Activated CD4-positive, alpha-beta memory T cell treated with anti-CD3 and anti-CD28 coated beads for 36 hours (primary cell): ENCODE measurements at regions of chr21 and their contacts with region 1.

Region 1: GRCh38 chr21:33976082-33977016 is 60.7 kb upstream of the ATP5PO start:
- DNase-seq: peak; percentile 79
- H3K4me3 Mint-ChIP-seq: peak overlapping the region; percentile 67
- H3K27ac Mint-ChIP-seq: peak overlapping the region; percentile 100
- H3K4me1 Mint-ChIP-seq: peaks cover 69% of the 10 kb centered on the region
- H3K27me3 Mint-ChIP-seq: no peaks in the 10 kb centered on the region

Region 2: GRCh38 chr21:33866826-33867225 is 109.5 kb before region 1 on chr21:
- CTCF ChIA-PET with region 1: no interaction called
- POLR2A ChIA-PET with region 1: no interaction called
- intact Hi-C with region 1: no loop called
- DNase-seq: no peak
- H3K4me3 Mint-ChIP-seq: no peak overlapping the region
- H3K27ac Mint-ChIP-seq: no peak overlapping the region
- H3K4me1 Mint-ChIP-seq: no peaks in the 10 kb centered on the region
- H3K27me3 Mint-ChIP-seq: peaks cover 7% of the 10 kb centered on the region

Region 3: DNA sequence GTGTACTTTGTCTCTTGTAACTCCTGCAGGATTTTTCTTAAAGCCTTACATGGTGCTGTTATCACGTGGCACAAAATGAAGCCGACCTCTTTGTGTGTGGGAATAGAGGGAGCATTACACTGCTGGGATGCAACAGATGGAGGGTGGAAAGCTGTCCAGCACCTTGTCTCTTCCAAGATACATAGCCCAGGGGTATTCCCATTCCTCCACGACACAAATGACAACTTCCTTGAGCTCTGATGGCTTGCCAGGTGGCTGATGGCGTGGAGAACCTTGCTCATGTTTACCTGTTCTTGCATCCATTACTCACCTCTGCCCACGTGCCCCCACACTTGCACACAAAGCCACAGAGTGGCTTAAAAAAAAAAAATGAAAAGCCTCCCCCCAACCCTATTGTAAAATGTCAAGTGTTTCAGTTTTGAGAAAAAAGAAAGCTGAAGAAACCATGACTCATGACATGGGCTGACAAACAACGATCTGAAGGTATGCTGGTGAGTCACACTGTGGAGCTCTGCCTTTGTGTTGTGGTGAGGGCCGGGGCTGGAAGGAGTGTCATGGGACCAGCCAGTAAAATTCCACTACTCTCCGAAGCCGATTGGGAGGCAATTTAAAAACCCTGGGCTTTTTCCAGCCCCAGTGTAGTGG is 28.8 kb before region 1 on chr21:
- CTCF ChIA-PET with region 1: interaction called, 28 read pairs
- POLR2A ChIA-PET with region 1: interaction called, 148 read pairs
- intact Hi-C with region 1: loop called (anchors 1 kb)
- DNase-seq: peak; percentile 92
- H3K4me3 Mint-ChIP-seq: peak overlapping the region; percentile 62
- H3K27ac Mint-ChIP-seq: peak overlapping the region; percentile 97
- H3K4me1 Mint-ChIP-seq: peaks cover 72% of the 10 kb centered on the region
- H3K27me3 Mint-ChIP-seq: peaks cover 4% of the 10 kb centered on the region

Region 4: GRCh38 chr21:34020005-34020847 is 43.9 kb after region 1 on chr21:
- CTCF ChIA-PET with region 1: interaction called, 3 read pairs
- POLR2A ChIA-PET with region 1: interaction called, 8 read pairs
- intact Hi-C with region 1: loop called (anchors 2 kb)
- DNase-seq: no peak
- H3K4me3 Mint-ChIP-seq: no peak overlapping the region
- H3K27ac Mint-ChIP-seq: no peak overlapping the region
- H3K4me1 Mint-ChIP-seq: peaks cover 20% of the 10 kb centered on the region
- H3K27me3 Mint-ChIP-seq: no peaks in the 10 kb centered on the region

Region 5: GRCh38 chr21:34037009-34037795 is 60.9 kb after region 1 on chr21:
- CTCF ChIA-PET with region 1: no interaction called
- POLR2A ChIA-PET with region 1: no interaction called
- intact Hi-C with region 1: no loop called
- DNase-seq: no peak
- H3K4me3 Mint-ChIP-seq: no peak overlapping the region
- H3K27ac Mint-ChIP-seq: no peak overlapping the region
- H3K4me1 Mint-ChIP-seq: peaks cover 9% of the 10 kb centered on the region
- H3K27me3 Mint-ChIP-seq: no peaks in the 10 kb centered on the region

Region 6: DNA sequence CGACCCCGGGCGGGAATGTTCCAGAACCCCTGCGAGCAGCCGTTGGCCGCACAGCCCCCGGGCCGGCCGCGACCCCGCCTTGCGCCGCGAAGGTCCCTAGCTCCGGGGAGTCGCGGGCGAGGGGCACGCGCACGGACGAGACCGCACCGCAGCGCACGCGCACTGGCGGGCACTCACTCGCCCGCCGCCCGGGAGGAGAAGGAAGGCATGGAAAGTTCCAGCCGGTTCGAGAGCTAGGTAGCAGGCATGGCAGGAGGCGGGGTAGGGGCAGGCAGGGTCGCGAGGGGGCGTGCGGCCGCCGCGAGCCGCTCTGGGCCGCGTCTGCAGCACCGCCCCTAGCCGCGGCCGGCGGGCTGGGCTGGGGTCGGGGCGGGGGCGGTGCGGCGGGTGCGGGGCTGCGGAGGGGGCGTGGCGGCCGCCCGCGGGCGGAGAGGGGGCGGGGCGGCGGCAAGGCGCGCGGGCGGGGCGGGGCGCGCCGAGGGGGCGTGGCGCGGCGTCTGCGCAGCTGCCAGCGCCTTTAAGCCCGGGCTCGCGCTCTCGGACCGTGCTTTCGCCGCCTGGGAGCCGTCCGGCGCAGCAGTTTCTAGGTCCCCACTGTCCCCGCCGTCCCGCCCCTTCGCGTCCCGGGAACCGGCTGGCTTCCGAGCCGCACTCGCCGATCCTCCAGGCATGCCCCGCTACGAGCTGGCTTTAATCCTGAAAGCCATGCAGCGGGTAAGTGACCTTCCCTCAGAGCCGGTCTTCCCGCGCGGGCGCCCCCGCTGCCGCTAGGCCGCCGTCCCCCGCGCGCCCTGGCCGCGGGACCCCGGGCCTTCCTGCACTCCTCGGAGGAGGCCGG is 96.9 kb after region 1 on chr21 and contains the starts of genes MRPS6 and SLC5A3:
- CTCF ChIA-PET with region 1: no interaction called
- POLR2A ChIA-PET with region 1: interaction called, 15 read pairs
- intact Hi-C with region 1: loop called (anchors 1 kb)
- DNase-seq: peak; percentile 81
- H3K4me3 Mint-ChIP-seq: peak within 1 kb of the TSS; percentile 95
- H3K27ac Mint-ChIP-seq: peak within 1 kb of the TSS; percentile 87
- H3K4me1 Mint-ChIP-seq: peaks cover 41% of the 10 kb centered on the region
- H3K27me3 Mint-ChIP-seq: no peaks in the 10 kb centered on the region
- total RNA-seq, gene MRPS6: 114 to 117 TPM
- total RNA-seq, gene SLC5A3: 25.7 to 27.5 TPM

Region 7: DNA sequence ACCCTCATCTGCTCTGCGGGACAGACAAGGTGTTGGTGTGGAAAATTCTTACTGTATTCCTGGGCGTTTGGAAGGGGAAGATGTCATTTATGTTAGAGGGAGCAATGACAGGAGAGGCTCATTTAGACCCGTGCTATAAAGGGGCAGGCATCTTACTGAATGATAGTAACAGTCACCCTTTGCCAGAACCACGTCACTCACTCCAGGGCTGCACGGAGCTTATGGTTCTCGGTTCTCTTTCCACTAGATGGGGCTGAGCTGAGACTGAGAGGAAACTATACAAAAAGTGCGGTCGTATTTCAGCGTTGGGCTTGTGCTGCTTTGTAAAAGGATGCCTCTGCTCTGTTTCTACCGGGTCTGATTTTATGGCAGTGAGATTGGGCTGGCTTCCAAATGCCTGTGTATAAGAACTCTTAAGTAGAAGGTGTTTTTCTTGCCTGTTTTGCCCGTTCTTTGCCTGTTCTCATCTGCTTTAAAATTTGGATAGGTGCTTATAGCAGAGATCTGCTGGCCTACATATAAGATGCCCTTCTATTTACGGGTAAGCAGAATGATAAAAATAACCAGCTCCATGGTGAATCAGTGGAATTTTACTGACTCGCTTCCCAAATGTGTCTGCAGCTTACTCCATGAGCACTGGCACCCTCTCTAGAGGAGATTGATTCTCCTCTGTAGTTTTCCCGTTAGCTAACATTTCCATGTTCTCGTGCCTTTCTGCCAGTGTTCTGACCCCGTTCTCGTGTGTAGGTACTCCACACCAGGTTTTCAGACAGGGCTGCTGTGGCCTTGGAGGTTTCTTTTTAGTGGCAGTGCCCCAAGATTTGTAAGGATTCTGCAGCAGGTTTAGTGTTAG is 152.9 kb after region 1 on chr21:
- CTCF ChIA-PET with region 1: interaction called, 3 read pairs
- POLR2A ChIA-PET with region 1: interaction called, 3 read pairs
- intact Hi-C with region 1: loop called (anchors 1 kb)
- DNase-seq: peak; percentile 84
- H3K4me3 Mint-ChIP-seq: peak overlapping the region; percentile 59
- H3K27ac Mint-ChIP-seq: peak overlapping the region; percentile 92
- H3K4me1 Mint-ChIP-seq: peaks cover 70% of the 10 kb centered on the region
- H3K27me3 Mint-ChIP-seq: no peaks in the 10 kb centered on the region

Region 8: DNA sequence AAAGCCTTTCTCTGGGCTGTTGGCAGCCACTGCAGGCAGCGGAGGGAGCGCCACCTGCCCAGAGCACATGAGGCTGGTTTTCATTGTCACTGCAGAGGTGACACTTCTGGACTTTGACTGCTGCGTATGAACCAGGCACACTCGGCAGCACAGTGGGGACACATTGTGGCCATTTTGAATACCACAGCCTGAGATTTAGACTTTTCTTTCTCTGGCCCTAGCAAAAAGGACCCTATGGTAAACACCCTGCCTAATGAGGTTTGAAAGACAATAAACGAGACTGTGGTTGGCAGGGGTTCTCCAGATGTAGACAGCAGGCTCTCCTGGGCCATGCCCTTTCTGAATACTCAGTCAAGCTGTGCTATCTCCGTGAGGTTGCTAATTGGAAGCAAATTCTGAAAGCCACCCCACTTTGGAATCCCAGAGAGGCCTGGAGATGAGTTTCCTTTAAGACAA is 375.5 kb after region 1 on chr21:
- CTCF ChIA-PET with region 1: interaction called, 11 read pairs
- POLR2A ChIA-PET with region 1: no interaction called
- intact Hi-C with region 1: no loop called
- DNase-seq: peak; percentile 49
- H3K4me3 Mint-ChIP-seq: no peak overlapping the region
- H3K27ac Mint-ChIP-seq: no peak overlapping the region
- H3K4me1 Mint-ChIP-seq: peaks cover 3% of the 10 kb centered on the region
- H3K27me3 Mint-ChIP-seq: peaks cover 9% of the 10 kb centered on the region